A673 (cell line): ENCODE measurements at regions of chr10 and their contacts with region 1.

Region 1: DNA sequence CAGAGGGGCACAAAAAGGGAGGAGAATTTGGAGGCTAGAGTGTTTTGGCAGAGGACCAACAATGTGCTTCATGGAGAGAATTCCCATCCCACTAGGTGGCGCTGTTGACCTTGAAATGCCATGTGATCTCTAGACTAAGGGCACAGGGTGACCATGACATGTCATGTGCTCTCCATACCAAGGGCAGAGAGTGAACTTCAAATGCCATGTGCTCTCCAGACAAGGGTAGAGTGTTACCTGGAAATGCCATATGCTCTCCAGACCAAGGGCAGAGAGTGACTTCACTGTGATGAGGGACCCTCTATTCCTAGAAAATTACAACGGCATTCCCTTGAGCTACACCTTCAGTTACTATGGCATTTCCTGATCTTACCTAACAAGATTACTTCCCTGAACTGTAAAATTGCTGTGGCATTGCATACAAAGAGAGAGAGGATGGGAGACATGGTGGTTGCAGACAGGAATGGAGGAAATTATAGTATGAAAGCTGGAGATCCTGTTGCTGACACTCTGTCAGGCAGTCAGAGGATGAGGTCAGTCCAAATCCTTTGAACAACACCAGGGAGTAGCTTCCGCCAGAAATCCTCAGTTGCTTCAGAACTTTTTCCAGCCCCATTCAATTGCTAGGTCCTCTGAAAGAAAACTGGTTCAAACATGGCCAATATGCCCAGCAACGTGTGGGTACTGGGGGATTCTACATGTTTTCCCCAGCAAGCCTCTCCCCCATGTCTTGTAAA is 60.9 kb upstream of the ACSM6 start:
- DNase-seq: peak; percentile 84
- H3K4me3 ChIP-seq: no peak overlapping the region
- H3K27ac ChIP-seq: no peak overlapping the region
- H3K4me1 ChIP-seq: no peaks in the 10 kb centered on the region
- H3K27me3 ChIP-seq: no peaks in the 10 kb centered on the region
- CTCF ChIP-seq: peak; percentile 77

Region 2: GRCh38 chr10:95445837-95446486 is 312.8 kb after region 1 on chr10:
- CTCF ChIA-PET with region 1: no interaction called
- POLR2A ChIA-PET with region 1: no interaction called
- intact Hi-C with region 1: loop called (anchors 5 kb)
- DNase-seq: peak; percentile 76
- H3K4me3 ChIP-seq: no peak overlapping the region
- H3K27ac ChIP-seq: no peak overlapping the region
- H3K4me1 ChIP-seq: no peaks in the 10 kb centered on the region
- H3K27me3 ChIP-seq: peaks cover 12% of the 10 kb centered on the region
- CTCF ChIP-seq: peak; percentile 84